ENCODE measurements at regions of chr10 and their contacts with region 1.

Region 1: GRCh38 chr10:6401562-6402348 is 178.3 kb downstream of the PRKCQ start:
- DNase-seq: peak; percentile 89
- H3K4me3 ChIP-seq: peak overlapping the region; percentile 23 to 80 (median 36)
- H3K27ac ChIP-seq: peak overlapping the region; percentile 86
- H3K4me1 ChIP-seq: peaks cover 6% of the 10 kb centered on the region
- H3K27me3 ChIP-seq: peaks cover 2 to 9% of the 10 kb centered on the region in 2 experiments
- CTCF ChIP-seq: peak; percentile 62 to 76
- POLR2A ChIP-seq: no peak

Region 2: DNA sequence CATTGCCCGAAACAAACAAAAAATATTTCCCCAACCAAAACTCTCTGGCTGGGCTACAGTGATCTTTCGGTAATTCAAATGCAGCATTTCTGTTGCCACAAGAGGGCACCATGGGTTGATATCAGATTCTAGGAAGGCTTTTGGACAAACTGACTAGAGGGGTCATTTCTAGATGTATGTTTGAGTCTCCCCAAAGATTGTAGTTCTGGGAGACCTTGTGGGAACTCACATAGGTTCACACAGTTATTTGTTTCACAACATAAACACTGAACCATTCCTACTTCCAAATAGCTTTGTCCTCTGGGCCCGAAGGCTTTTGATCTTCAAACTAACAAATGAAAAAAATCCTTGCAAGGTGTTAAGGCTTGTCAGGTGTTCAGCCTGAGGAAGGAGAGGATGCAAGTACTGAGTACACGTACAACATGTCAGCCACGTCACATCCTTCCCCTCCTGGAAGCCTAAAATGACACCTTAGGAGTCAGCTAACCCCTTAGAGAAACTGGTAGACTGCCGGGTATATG is 387.5 kb before region 1 on chr10:
- CTCF ChIA-PET with region 1: interaction called, 111 read pairs
- POLR2A ChIA-PET with region 1: interaction called, 5 read pairs
- dilution Hi-C with region 1: no loop called
- intact Hi-C with region 1: loop called (anchors 1 kb)
- DNase-seq: peak; percentile 53
- H3K4me3 ChIP-seq: no peak overlapping the region
- H3K27ac ChIP-seq: no peak overlapping the region
- H3K4me1 ChIP-seq: no peaks in the 10 kb centered on the region
- H3K27me3 ChIP-seq: peaks cover 0 to 6% of the 10 kb centered on the region in 2 experiments
- CTCF ChIP-seq: peak; percentile 58 to 60
- POLR2A ChIP-seq: no peak

Region 3: DNA sequence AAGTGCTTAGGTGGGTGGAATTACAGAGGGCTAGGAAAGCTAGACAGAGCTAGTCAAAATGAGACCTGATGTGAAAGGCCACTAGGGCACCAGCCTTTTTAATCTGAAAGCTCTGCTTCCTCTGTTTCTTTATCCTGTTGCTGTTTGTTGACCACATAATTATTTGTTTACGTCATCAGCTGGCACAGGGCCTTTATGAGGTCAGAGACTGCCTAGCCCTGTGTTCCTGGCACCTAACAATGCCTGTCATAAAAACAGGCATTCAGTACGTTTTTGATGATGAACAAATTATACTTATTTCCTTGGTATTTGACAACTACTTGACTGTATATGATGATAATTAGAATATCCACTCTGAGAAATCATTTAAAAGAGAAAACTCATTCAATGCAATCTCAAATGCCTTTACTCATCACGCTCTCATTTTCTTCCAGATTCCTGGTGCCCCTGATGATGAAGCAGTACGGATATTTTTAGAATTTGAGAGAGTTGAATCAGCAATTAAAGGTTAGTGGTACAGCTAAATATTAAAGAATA is 286.9 kb before region 1 on chr10:
- CTCF ChIA-PET with region 1: interaction called, 56 read pairs
- POLR2A ChIA-PET with region 1: interaction called, 3 read pairs
- dilution Hi-C with region 1: no loop called
- intact Hi-C with region 1: no loop called
- DNase-seq: peak; percentile 60
- H3K4me3 ChIP-seq: no peak overlapping the region
- H3K27ac ChIP-seq: peak overlapping the region; percentile 74
- H3K4me1 ChIP-seq: peaks cover 13% of the 10 kb centered on the region
- H3K27me3 ChIP-seq: no peaks in the 10 kb centered on the region
- CTCF ChIP-seq: no peak
- POLR2A ChIP-seq: no peak

Region 4: GRCh38 chr10:6144406-6145165 is 257.2 kb before region 1 on chr10:
- CTCF ChIA-PET with region 1: interaction called, 49 read pairs
- POLR2A ChIA-PET with region 1: interaction called, 4 read pairs
- dilution Hi-C with region 1: no loop called
- intact Hi-C with region 1: no loop called
- DNase-seq: peak; percentile 84
- H3K4me3 ChIP-seq: peak overlapping the region; percentile 65 to 84 (median 81)
- H3K27ac ChIP-seq: peak overlapping the region; percentile 90
- H3K4me1 ChIP-seq: peaks cover 10% of the 10 kb centered on the region
- H3K27me3 ChIP-seq: no peaks in the 10 kb centered on the region
- CTCF ChIP-seq: no peak
- POLR2A ChIP-seq: peak; percentile 82

Region 5: GRCh38 chr10:6195846-6196245 is 205.9 kb before region 1 on chr10:
- CTCF ChIA-PET with region 1: interaction called, 285 read pairs
- POLR2A ChIA-PET with region 1: interaction called, 3 read pairs
- dilution Hi-C with region 1: no loop called
- intact Hi-C with region 1: no loop called
- DNase-seq: peak; percentile 28
- H3K4me3 ChIP-seq: no peak overlapping the region
- H3K27ac ChIP-seq: no peak overlapping the region
- H3K4me1 ChIP-seq: peaks cover 14% of the 10 kb centered on the region
- H3K27me3 ChIP-seq: no peaks in the 10 kb centered on the region
- CTCF ChIP-seq: no peak
- POLR2A ChIP-seq: no peak

Region 6: DNA sequence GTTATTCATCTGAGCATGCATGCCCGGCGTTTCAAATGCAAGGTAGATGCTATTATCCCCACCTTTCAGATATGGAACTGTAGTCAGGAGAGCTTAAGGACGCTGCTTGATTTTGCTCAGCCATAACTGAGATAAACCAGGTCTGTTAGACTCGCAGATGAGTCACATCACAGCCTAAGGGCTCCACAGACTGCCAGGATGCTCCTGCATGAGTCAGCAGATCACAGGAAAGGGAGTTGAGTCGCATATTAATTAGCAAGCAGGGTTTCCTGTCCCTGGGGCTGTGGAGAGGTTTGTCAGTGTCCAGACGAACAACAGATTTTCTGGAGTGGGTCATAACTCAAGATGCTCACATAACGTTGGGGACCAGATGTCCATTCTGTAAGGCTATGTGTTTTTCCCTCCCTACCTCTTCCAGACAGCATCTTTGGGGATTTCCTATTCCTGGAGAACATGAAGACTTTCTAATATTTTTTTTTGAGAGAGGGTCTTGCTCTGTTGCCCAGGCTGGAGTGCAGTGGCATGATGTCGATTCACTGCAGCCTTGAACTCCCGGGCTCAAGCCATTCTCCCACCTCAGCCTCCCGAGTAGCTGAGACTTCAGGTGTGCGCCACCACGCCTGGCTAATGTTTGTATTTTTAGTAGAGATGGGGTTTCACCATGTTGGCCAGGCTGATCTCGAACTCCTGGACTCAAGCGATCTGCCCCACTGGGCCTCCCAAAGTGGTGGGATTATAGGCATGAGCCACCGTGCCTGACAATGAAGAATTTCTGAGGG is 162.4 kb before region 1 on chr10:
- CTCF ChIA-PET with region 1: interaction called, 22 read pairs
- POLR2A ChIA-PET with region 1: no interaction called
- dilution Hi-C with region 1: no loop called
- intact Hi-C with region 1: loop called (anchors 1 kb)
- DNase-seq: peak; percentile 94
- H3K4me3 ChIP-seq: no peak overlapping the region
- H3K27ac ChIP-seq: peak overlapping the region; percentile 50
- H3K4me1 ChIP-seq: peaks cover 13% of the 10 kb centered on the region
- H3K27me3 ChIP-seq: no peaks in the 10 kb centered on the region
- CTCF ChIP-seq: no peak
- POLR2A ChIP-seq: no peak

Region 7: GRCh38 chr10:6416892-6417512 is 15.2 kb after region 1 on chr10:
- CTCF ChIA-PET with region 1: interaction called, 43 read pairs
- POLR2A ChIA-PET with region 1: no interaction called
- dilution Hi-C with region 1: no loop called
- intact Hi-C with region 1: no loop called
- DNase-seq: peak; percentile 71
- H3K4me3 ChIP-seq: no peak overlapping the region
- H3K27ac ChIP-seq: no peak overlapping the region
- H3K4me1 ChIP-seq: no peaks in the 10 kb centered on the region
- H3K27me3 ChIP-seq: peaks cover 6 to 7% of the 10 kb centered on the region in 2 experiments
- CTCF ChIP-seq: peak; percentile 39 to 44
- POLR2A ChIP-seq: no peak

Measured in endothelial cell of umbilical vein (primary cell).